Activated naive CD4-positive, alpha-beta T cell treated with anti-CD3 and anti-CD28 coated beads for 36 hours (primary cell): ENCODE measurements at regions of chr11 and their contacts with region 1.

Region 1: GRCh38 chr11:1335811-1336761 is 26.7 kb upstream of the TOLLIP start:
- DNase-seq: peak; percentile 70
- H3K4me3 Mint-ChIP-seq: peak overlapping the region; percentile 76
- H3K27ac Mint-ChIP-seq: peak overlapping the region; percentile 56
- H3K4me1 Mint-ChIP-seq: peaks cover 10% of the 10 kb centered on the region
- H3K27me3 Mint-ChIP-seq: peaks cover 3% of the 10 kb centered on the region

Region 2: DNA sequence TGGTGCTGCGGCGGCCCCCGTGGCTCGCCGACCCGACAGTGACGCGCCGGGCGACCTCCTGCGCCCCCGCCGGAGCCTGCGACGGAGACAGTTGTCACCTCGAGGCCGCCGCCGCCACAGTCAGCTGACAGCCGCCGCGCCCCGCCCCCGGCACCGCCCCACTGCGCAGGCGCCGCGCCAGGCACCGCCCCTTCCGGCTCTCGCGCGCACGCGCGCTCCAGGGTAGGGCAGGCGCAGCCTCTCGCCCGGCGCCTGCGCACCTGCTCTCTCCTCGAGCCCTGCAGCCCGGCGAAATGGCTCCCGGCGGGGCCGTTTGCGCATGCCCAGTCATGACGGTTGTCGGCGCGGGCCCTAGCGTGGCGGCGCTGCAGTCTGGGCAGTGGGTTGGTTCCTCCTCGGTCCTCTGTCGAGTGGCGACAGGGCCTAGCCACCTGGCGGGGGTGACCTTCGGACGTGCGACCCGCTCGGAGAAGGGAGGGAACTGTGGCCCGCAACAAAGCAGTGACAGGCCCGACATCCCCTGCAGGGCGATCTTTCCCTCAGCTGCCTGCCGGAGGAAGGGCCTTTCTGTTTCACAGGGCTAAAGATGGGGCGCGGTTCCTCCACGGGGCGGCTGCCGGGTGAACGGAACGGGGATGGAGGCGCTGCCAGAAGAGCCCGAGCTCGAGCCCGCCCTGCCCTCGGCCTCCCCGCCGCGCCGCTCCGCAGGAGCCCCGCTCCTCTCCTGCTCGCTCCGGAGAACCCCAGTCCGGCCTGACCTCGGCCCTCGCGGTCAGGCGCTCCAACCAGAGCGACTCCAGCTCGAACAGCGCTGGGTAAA is 26.4 kb before region 1 on chr11 and contains the start of gene TOLLIP:
- CTCF ChIA-PET with region 1: interaction called, 3 read pairs
- intact Hi-C with region 1: loop called (anchors 1 kb)
- DNase-seq: peak; percentile 97
- H3K4me3 Mint-ChIP-seq: peak within 1 kb of the TSS; percentile 89
- H3K27ac Mint-ChIP-seq: peak within 1 kb of the TSS; percentile 94
- H3K4me1 Mint-ChIP-seq: peaks cover 40% of the 10 kb centered on the region
- H3K27me3 Mint-ChIP-seq: no peaks in the 10 kb centered on the region
- total RNA-seq, gene TOLLIP: 19.9 to 21.7 TPM

Region 3: DNA sequence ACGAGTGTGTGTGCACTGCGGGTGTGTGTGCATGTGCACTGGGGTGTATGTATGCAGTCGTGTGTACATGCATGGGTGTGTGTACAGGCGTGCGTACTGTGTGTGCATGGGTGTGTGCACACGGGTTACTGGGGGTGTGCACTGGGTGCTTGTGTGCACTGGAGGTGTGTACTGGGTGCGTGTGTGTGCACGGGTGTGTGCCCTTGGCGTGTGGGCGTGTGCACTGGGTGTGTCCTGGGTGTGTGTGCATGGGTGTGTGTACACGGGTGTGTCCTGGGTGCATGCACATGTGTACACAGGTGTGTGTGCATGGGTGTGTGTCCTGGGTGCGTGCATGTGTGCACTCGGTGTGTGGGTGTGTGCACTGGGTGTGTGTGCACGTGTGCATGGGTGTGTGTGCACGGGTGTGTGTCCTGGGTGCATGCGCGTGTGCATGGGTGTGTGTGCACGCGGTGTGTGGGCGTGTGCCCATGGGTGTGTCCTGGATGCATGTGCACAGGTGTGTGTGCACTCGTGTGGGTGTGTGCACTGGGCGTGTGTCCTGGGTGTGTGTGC is 92.8 kb after region 1 on chr11:
- CTCF ChIA-PET with region 1: no interaction called
- intact Hi-C with region 1: no loop called
- DNase-seq: no peak
- H3K4me3 Mint-ChIP-seq: no peak overlapping the region
- H3K27ac Mint-ChIP-seq: no peak overlapping the region
- H3K4me1 Mint-ChIP-seq: no peaks in the 10 kb centered on the region
- H3K27me3 Mint-ChIP-seq: no peaks in the 10 kb centered on the region